GM10248 (cell line): ENCODE measurements at regions of chr20 and their contacts with region 1.

Region 1: GRCh38 chr20:49620364-49621240 is 52.7 kb upstream of the PTGIS start:
- DNase-seq: peak; percentile 78
- CTCF ChIP-seq: no peak

Region 2: GRCh38 chr20:49562311-49563014 is 58.1 kb before region 1 on chr20:
- CTCF ChIA-PET with region 1: no interaction called
- POLR2A ChIA-PET with region 1: no interaction called
- DNase-seq: no peak
- CTCF ChIP-seq: no peak

Region 3: DNA sequence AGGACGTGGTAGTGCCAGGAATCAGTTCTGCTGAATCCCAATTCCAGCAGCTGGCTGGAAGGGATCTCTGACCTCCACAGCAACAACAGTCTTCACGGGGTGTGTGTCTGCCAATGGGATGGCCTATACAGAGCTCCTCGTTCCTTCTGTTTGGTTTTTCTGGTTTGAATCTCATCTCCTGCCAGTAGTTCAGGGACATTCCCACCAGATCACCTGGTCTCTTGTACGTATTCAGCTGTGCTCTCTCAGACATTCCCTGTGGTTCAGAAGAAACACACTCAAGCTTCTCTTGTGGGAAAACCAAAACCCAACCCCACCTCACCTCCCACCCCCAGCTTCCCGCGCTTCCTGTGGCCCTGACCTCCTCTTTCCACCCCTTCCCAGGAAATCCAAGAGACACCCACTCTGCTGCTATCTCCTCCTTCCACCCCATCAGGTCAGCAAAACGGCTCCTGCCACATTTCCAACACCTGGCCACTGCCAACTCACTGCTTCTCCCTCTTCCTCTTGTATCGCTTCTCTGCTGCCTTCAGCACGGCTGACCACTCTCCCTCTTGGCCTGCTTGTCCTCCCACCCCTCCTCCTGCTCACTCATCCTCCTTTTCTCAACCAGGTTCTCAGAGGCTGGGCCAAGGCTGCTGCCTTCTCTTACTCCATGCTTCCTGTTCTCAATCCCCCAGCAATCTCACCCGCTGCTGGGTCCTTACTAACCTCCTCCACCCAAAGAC is 10.6 kb after region 1 on chr20:
- CTCF ChIA-PET with region 1: interaction called, 17 read pairs
- POLR2A ChIA-PET with region 1: interaction called, 10 read pairs
- DNase-seq: peak; percentile 60
- CTCF ChIP-seq: no peak